Mammary epithelial cell (primary cell): ENCODE measurements at regions of chrX and their contacts with region 1.

Region 1: GRCh38 chrX:100685284-100685996 is 41.4 kb downstream of the SRPX2 start:
- DNase-seq: peak; percentile 65
- H3K4me3 ChIP-seq: no peak overlapping the region
- H3K27ac ChIP-seq: no peak overlapping the region
- H3K4me1 ChIP-seq: no peaks in the 10 kb centered on the region
- H3K27me3 ChIP-seq: no peaks in the 10 kb centered on the region
- CTCF ChIP-seq: peak; percentile 84 to 88

Region 2: DNA sequence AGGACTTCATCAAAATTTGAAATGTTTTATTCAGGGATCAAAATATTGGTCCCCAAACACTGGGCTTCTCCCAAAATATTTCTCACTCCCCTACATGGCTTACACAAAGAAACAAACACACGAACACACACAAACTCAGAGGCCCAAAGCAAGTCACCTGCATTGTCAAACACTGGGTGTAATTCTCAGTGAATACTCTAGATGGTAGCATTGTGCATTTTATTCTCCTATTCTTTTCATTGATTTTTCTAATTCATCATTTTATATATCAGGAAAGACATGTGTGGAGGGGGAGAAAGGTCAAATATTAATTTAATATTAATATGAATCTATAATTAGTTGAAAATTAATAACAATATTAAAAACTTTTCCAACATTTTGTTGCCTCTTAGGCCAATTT is 173.0 kb before region 1 on chrX:
- CTCF ChIA-PET with region 1: no interaction called
- dilution Hi-C with region 1: no loop called
- in situ Hi-C with region 1: no loop called
- intact Hi-C with region 1: loop called (anchors 5 kb)
- DNase-seq: peak; percentile 2
- H3K4me3 ChIP-seq: no peak overlapping the region
- H3K27ac ChIP-seq: no peak overlapping the region
- H3K4me1 ChIP-seq: no peaks in the 10 kb centered on the region
- H3K27me3 ChIP-seq: no peaks in the 10 kb centered on the region
- CTCF ChIP-seq: peak; percentile 62 to 66

Region 3: DNA sequence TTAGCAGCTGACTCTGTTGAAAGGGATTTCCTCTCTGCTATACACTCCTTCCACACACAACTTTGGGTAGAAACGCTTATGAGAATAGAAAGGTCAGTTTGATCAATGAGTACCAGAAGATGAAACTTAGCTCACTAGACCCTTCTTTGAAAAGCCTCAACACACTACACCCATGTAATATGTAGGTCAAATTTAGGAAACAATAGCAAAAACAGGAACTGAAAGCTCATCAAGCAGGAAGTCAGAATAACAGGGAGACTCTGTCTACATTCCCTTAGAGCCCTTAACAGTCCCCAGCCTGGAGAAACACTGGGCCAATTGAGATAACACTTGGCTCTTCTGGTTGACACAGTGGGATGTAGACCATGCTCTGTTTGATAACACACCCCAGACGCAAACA is 10.7 kb before region 1 on chrX:
- CTCF ChIA-PET with region 1: interaction called, 9 read pairs
- dilution Hi-C with region 1: no loop called
- in situ Hi-C with region 1: no loop called
- intact Hi-C with region 1: loop called (anchors 1 kb)
- DNase-seq: no peak
- H3K4me3 ChIP-seq: no peak overlapping the region
- H3K27ac ChIP-seq: no peak overlapping the region
- H3K4me1 ChIP-seq: no peaks in the 10 kb centered on the region
- H3K27me3 ChIP-seq: no peaks in the 10 kb centered on the region
- CTCF ChIP-seq: no peak

Region 4: DNA sequence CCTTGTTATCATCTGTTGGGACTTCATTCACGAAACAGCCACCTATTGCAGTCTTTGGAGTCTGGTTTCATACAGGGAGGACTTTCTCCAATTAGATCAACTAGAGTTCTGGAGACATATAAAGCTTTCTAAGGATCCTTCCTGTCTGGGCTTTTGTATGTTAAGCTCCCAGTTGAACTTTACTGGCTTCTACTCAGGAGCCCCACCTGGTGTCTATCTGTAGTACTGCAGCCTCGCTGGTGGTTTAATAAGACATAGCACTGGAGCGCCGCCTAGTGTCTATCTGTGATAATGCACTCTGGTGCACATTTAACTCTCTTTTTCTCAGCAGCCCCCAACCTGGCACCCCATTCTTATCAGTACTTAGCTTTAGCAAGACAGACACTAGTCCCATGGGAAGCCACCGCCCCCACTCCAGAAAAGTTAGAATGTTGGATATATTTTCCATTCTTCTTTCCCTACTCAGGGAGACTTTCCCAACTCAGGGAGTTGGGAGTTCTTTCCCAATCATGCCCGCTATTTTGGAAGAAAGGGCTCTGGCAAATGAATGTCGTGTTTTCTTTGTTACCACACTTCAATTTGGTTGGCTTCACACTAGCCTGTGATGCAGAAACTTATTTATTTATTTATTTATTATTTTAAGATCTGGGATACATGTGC is 83.4 kb after region 1 on chrX:
- CTCF ChIA-PET with region 1: interaction called, 22 read pairs
- dilution Hi-C with region 1: no loop called
- in situ Hi-C with region 1: loop called (anchors 5 kb)
- intact Hi-C with region 1: loop called (anchors 1 kb)
- DNase-seq: peak; percentile 52
- H3K4me3 ChIP-seq: no peak overlapping the region
- H3K27ac ChIP-seq: no peak overlapping the region
- H3K4me1 ChIP-seq: no peaks in the 10 kb centered on the region
- H3K27me3 ChIP-seq: no peaks in the 10 kb centered on the region
- CTCF ChIP-seq: peak; percentile 100

Region 5: DNA sequence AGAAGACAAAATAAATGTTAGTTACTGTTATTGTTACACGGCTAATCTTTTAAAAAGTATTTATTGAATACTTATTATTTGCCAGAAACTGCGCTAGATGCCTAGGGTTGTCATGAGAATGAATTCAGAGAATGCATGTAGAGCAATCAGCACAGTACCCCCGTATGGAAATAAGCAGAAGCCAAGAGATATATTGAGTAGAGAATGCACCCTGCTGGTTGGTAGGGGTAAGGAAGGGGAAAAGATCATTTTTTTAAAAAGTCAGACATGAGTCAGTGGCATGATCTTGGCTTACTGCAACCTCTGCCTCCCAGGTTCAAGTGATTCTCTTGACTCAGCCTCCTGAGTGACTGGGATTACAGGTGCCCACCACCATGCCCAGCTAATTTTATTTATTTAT is 521.0 kb after region 1 on chrX:
- CTCF ChIA-PET with region 1: no interaction called
- dilution Hi-C with region 1: no loop called
- in situ Hi-C with region 1: no loop called
- intact Hi-C with region 1: loop called (anchors 10 kb)
- DNase-seq: peak; percentile 32
- H3K4me3 ChIP-seq: no peak overlapping the region
- H3K27ac ChIP-seq: no peak overlapping the region
- H3K4me1 ChIP-seq: no peaks in the 10 kb centered on the region
- H3K27me3 ChIP-seq: peaks cover 2% of the 10 kb centered on the region
- CTCF ChIP-seq: peak; percentile 34 to 51

Region 6: GRCh38 chrX:101287402-101287801 is 602.0 kb after region 1 on chrX:
- CTCF ChIA-PET with region 1: no interaction called
- dilution Hi-C with region 1: no loop called
- in situ Hi-C with region 1: loop called (anchors 10 to 25 kb)
- intact Hi-C with region 1: loop called (anchors 1 kb)
- DNase-seq: peak; percentile 25
- H3K4me3 ChIP-seq: no peak overlapping the region
- H3K27ac ChIP-seq: no peak overlapping the region
- H3K4me1 ChIP-seq: no peaks in the 10 kb centered on the region
- H3K27me3 ChIP-seq: peaks cover 2% of the 10 kb centered on the region
- CTCF ChIP-seq: peak; percentile 62 to 67